Uterus (tissue), 4 donors: ENCODE measurements at regions of chr1 and their contacts with region 1.

Region 1: GRCh38 chr1:40153073-40153770 is 8.0 kb upstream of the RLF start:
- DNase-seq: no peak
- H3K4me3 ChIP-seq: no peak overlapping the region
- H3K27ac ChIP-seq: peak overlapping the region in 1 of 2 donors; percentile 13
- H3K4me1 ChIP-seq: no peaks in the 10 kb centered on the region
- H3K27me3 ChIP-seq: no peaks in the 10 kb centered on the region
- CTCF ChIP-seq: peak; percentile 54 to 74 (median 61)
- POLR2A ChIP-seq: no peak

Region 2: DNA sequence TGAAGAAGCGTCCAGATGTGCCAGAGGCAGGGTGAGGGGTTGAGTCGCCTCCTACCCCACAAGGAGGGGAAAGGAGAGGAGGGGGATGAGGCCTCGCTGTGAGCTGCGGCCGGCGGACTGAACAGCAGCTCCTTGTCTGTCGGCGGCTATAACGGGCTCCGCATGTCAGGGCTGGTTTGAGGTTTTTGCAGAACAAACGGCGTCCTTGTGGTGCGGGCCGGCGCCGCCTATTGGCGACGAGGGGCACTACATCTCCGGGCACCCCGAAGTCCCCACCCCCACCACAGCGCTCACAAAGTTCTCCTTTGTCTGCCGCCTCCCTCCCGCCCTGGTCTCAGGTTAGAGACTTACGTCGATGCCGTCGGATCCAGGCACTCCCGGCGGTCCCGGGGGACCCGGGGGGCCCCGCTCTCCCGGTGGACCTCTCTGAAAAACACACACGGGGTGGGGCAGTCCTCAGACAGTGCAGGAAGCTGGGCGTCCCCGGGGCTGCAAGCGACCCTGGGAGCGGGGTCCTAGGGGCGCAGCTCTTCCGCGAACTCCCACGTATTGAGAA is 162.1 kb after region 1 on chr1:
- intact Hi-C with region 1: loop called (anchors 10 kb)
- DNase-seq: peak; percentile 73 to 82
- H3K4me3 ChIP-seq: peak overlapping the region; percentile 18 to 31
- H3K27ac ChIP-seq: peak overlapping the region; percentile 9 to 52
- H3K4me1 ChIP-seq: peaks cover 0 to 7% of the 10 kb centered on the region in 2 donors
- H3K27me3 ChIP-seq: peaks cover 0 to 7% of the 10 kb centered on the region in 2 donors
- CTCF ChIP-seq: peak; percentile 74 to 88 (median 86)
- POLR2A ChIP-seq: no peak